Cardiac septum (tissue), 1 donor: ENCODE measurements at regions of chr4 and their contacts with region 1.

Region 1: DNA sequence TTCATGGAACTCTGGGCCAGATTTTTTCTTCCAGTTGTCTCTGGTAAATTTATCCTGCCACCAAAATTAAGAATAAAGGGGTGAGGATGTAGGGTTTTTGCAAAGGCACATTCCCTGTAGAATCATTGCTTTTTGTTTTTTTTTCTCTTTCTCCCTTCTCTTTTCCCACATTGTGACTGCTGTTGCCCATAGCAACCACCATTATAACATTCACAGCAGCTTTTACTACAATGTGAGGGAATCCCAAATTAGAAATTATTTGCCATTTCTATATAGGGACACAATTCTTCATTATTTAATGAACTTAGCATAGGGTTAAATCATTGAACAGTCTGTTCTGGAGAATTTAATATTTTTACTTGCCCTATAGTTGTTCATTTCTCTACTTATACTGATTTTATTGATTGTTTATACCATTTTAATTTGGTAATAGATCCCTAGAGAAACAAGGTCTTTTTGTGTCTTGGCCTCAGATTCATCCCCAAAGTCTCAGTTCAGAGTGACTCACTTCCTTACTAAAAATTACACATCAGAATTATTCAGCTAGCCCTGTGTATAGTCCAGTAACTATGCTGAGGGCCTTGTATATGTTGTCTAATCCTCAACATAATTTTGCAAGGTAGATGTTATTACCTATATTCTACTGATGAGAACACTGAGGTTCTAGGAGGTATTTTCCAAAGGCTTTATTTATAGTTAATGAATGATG is 80.8 kb upstream of the ANK2 start:
- DNase-seq: no peak

Region 2: DNA sequence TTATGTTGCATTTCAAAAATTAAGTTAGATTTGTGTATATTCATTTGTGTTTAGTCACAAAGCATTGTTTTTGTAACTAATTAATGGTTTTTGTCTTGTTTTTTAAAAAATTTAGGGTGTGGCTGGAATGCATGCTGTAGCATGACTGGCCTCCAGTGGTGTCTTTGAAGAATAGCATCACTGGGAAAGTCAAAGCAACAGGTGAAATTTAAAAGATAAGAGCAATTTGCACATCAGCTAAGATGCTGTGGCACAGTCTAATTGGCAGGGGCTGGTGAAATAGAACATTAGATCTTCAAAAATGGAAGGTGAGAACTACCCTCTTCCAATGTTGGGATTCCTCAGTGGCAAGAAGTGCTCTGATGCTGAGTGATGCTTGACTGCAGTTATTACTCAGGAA is 126.2 kb after region 1 on chr4:
- intact Hi-C with region 1: loop called (anchors 10 kb)
- DNase-seq: no peak